RWPE1 (cell line): ENCODE measurements at regions of chr11 and their contacts with region 1.

Region 1: GRCh38 chr11:66408488-66409214 is 12.2 kb upstream of the NPAS4 start:
- DNase-seq: peak; percentile 89
- H3K27ac ChIP-seq: no peak overlapping the region
- CTCF ChIP-seq: peak; percentile 99

Region 2: GRCh38 chr11:66438504-66439466 is 30.1 kb after region 1 on chr11 and contains the start of gene MRPL11:
- CTCF ChIA-PET with region 1: interaction called, 10 read pairs
- POLR2A ChIA-PET with region 1: no interaction called
- DNase-seq: peak; percentile 98
- H3K27ac ChIP-seq: peak within 1 kb of the TSS; percentile 78
- CTCF ChIP-seq: peak; percentile 89

Region 3: DNA sequence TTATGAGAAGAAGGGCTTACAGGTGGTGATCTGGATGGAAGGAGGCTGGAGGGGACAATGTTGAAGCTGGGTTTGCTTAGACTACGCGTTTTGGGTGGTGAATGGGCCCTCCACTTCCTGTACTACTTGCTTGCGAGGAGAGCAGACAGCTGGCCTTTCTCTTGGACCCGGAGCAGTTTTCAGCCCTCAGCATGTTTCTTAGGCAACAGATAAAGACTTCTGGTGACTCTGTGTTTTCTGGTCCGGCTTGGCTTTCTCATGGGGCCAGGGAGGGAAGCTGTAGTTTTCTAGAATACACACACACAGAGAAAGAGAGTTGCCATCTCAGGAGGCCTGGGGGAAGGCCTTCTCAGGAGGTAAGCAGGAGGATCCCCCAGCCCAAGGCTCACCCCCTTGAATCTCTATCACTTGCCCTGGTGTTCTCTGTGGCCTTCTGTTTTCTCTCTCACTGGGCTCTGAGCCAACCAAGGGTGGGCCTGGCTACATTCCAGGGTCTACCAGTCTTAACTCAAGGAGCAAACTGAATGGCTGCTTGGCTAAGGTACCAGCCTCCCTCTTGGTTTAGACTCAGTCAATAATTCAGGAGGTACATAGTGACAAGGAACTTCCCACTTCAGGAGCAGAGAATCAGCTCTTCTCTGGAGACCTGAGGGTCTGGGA is 186.7 kb after region 1 on chr11:
- CTCF ChIA-PET with region 1: no interaction called
- POLR2A ChIA-PET with region 1: no interaction called
- DNase-seq: no peak
- H3K27ac ChIP-seq: peak overlapping the region; percentile 29
- CTCF ChIP-seq: no peak

Region 4: DNA sequence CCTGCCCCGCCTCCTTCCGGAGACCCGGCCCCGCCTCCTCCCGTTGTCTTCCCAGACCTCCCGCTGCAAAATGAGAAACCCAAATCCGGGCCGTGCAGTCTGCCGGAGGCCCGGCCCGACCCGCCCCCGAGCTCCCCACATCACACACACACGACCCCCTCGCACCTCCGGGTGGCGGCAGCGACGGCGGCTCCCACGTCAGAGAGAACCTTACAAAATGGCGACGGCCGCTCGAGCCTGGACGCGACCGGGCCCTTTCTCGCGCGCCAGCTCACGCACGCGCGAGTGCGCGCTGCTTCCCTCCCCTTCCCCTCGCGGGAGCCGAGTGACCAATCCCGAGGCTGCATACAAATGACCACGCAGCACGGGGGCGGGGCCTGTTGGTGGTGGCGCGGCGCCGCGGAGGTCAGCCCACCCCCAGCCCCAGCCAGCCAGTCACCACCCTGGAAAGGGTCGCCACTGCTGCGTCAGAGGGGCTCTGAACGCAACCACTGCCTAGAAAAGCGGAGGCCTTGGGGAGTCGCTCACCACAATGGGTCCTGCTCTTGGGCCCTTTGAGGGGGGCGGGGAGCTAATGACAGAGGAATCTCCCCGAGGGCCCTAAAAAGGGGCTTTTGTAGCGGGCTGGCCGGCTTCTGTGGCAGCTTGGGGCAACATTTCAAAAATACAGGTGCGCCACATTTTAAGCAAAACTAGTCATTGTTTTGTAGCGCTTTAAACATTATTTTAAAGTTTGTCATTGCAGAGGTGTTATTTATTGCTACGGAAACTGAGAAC is 269.1 kb after region 1 on chr11 and contains the start of gene RBM4B:
- CTCF ChIA-PET with region 1: interaction called, 13 read pairs
- POLR2A ChIA-PET with region 1: no interaction called
- DNase-seq: peak; percentile 95
- H3K27ac ChIP-seq: peak within 1 kb of the TSS; percentile 94
- CTCF ChIP-seq: no peak